ENCODE measurements at regions of chr13 and their contacts with region 1.

Region 1: DNA sequence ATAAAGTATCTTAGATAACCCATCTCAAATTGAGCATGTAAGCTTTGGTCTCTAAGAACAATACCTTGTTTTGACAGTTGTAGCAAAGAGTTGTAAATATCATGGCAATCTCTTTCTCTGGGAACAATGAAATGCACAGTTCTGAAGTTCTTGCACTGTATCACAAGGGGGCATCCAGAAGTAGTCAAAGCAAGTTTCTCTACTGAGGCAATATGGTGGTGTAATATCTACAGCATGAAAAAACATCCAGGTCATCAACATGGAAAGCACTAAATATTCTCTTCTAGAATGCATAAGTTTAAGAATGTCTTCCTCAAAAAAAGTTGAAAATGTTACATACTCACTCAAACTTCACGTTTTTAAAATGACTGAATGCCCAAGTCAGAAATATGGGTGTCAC is 19.6 kb downstream of the MTMR6 start:
- DNase-seq: no peak
- H3K4me3 ChIP-seq: no peak overlapping the region
- H3K27ac ChIP-seq: no peak overlapping the region
- H3K4me1 ChIP-seq: peaks cover 0 to 17% (median 4%) of the 10 kb centered on the region in 6 donors
- H3K27me3 ChIP-seq: no peaks in the 10 kb centered on the region
- CTCF ChIP-seq: peak in 1 of 11 experiments; percentile 14
- POLR2A ChIP-seq: no peak

Region 2: GRCh38 chr13:25329706-25330105 is 62.0 kb after region 1 on chr13:
- intact Hi-C with region 1: loop called (anchors 10 kb)
- DNase-seq: no peak
- H3K4me3 ChIP-seq: no peak overlapping the region
- H3K27ac ChIP-seq: no peak overlapping the region
- H3K4me1 ChIP-seq: no peaks in the 10 kb centered on the region
- H3K27me3 ChIP-seq: no peaks in the 10 kb centered on the region
- CTCF ChIP-seq: no peak
- POLR2A ChIP-seq: no peak